Activated CD8-positive, alpha-beta T cell treated with anti-CD3 and anti-CD28 coated beads for 36 hours (primary cell): ENCODE measurements at regions of chr20 and their contacts with region 1.

Region 1: DNA sequence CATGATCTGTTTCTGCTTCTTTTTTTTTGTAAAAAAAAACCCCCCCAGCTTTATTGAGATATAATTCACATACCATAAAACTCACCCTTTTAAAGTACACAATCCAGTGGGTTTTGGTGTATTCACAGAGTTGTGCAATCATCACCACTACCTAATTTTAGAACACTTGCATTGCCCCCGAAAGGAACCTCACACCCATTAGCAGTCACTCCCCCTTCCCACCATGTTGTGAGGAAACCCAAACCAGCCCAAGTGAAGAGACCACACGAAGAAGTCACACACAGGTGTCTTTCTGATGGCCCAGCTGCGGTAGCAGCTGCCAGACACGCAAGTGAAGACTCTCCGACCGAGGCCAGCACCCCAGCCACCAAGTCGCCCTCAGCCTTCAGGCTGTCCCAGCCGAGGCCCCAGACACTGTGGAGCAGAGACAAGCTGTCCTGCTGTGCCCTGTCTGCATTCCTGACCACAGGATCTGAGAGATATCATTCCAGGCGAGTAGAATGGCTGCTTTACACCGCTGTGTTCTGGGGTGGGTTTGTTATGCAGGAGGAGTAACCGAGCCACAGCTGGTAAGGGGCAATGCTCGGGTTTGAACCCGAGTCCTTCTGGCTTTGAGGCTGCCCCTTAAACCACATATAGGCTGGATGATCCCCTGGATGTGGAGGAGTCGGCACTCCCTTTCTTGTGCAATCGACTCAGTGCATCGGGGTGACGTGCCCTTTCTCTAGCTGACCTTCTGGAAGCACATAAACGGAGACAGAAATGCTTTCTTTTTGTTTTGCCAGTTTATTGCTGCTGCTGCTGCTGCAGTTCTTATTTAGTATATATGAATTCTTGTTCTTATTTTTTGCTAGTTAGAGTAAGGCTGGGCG is 59.1 kb upstream of the PTPN1 start:
- DNase-seq: peak; percentile 56
- ATAC-seq: peak; percentile 76
- H3K4me3 Mint-ChIP-seq: peak overlapping the region; percentile 5
- H3K27ac Mint-ChIP-seq: no peak overlapping the region
- H3K4me1 Mint-ChIP-seq: peaks cover 14% of the 10 kb centered on the region
- H3K27me3 Mint-ChIP-seq: peaks cover 45% of the 10 kb centered on the region
- CTCF ChIP-seq: no peak

Region 2: GRCh38 chr20:50338479-50339391 is 112.4 kb before region 1 on chr20:
- CTCF ChIA-PET with region 1: no interaction called
- POLR2A ChIA-PET with region 1: no interaction called
- intact Hi-C with region 1: loop called (anchors 5 kb)
- DNase-seq: peak; percentile 89
- ATAC-seq: peak; percentile 83
- H3K4me3 Mint-ChIP-seq: peak overlapping the region; percentile 60
- H3K27ac Mint-ChIP-seq: peak overlapping the region; percentile 94
- H3K4me1 Mint-ChIP-seq: peaks cover 38% of the 10 kb centered on the region
- H3K27me3 Mint-ChIP-seq: peaks cover 4% of the 10 kb centered on the region
- CTCF ChIP-seq: peak; percentile 17